Cardiac septum (tissue), 1 donor: ENCODE measurements at regions of chr2 and their contacts with region 1.

Region 1: DNA sequence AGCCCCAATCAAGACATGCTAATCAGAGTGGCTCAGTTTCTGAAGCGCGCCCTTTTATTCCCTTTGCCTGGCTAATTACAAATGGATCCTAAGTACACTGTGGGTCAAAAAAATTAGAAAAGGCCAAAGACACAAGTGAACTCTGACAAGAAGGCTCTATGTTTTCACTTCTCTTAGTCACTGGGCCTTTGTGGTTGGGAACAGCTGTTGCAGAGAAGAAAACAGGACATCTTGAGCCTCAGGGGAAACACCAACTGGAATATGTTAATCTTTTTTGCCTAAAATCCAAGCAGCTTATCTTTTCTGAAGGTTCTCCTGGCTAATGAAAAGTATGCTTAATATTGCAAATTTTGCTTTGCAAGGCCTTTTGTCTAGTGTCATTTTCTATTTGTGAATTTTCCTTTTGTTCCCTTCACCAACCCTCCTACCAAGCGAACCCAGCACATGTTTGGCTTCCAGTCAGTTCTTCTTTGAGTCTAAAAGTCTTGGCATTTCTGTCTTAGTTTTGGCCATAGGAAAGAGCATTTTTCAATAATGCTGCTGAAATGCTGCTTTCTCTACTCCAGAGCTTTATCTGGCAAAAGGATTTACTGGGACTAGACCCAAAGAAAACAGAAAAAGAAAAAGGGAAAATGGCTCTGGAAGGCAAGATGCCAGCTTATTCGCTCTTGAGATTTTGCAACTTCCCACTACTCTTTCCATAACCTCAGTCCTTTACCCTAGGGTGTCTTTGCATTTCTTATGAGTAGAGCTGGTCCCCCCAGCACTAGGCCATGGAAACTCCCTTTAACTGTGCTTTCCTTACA is 440.2 kb upstream of the ST6GAL2 start:
- DNase-seq: no peak

Region 2: GRCh38 chr2:106719222-106719621 is 607.0 kb before region 1 on chr2:
- intact Hi-C with region 1: loop called (anchors 5 kb)
- DNase-seq: no peak